Mammary epithelial cell (primary cell): ENCODE measurements at regions of chr2 and their contacts with region 1.

Region 1: GRCh38 chr2:97870396-97870843 is 125.3 kb downstream of the TMEM131 start:
- DNase-seq: peak; percentile 82
- H3K4me3 ChIP-seq: no peak overlapping the region
- H3K27ac ChIP-seq: peak overlapping the region; percentile 85
- H3K4me1 ChIP-seq: peaks cover 42% of the 10 kb centered on the region
- H3K27me3 ChIP-seq: no peaks in the 10 kb centered on the region
- CTCF ChIP-seq: no peak

Region 2: GRCh38 chr2:97654791-97655190 is 215.6 kb before region 1 on chr2:
- CTCF ChIA-PET with region 1: no interaction called
- dilution Hi-C with region 1: no loop called
- in situ Hi-C with region 1: no loop called
- intact Hi-C with region 1: no loop called
- DNase-seq: no peak
- H3K4me3 ChIP-seq: no peak overlapping the region
- H3K27ac ChIP-seq: no peak overlapping the region
- H3K4me1 ChIP-seq: no peaks in the 10 kb centered on the region
- H3K27me3 ChIP-seq: no peaks in the 10 kb centered on the region
- CTCF ChIP-seq: no peak

Region 3: DNA sequence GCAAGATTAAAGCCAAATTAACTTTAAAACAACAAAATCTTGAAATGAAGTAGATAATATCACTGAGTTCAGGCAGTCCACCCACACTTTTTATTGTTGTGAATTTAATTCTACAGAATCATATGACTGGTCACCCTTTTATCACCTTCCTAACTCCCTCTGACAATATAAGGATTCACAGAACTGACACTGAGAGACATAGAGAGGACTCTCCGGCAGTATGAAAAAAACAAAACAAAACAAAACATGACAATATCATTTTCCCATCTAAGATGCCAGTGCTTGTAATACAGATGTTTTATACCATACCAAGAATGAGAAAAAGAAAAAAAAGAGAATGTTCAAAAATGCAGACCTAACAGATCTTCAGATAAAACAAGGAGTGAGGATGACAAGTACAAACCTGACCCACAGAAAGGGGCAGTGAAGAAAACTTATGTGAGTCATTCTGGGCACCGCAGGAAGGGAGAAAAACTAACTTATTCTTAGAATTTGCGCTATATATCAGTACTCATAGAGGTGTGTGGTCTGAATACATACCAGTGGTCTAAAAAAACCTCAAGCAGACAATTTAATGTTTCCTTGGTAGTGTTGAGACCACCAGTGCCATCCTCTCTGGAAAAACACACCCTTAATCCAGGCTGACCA is 20.4 kb before region 1 on chr2:
- CTCF ChIA-PET with region 1: no interaction called
- dilution Hi-C with region 1: no loop called
- in situ Hi-C with region 1: no loop called
- intact Hi-C with region 1: loop called (anchors 1 kb)
- DNase-seq: peak; percentile 82
- H3K4me3 ChIP-seq: peak overlapping the region in 2 of 3 experiments; percentile 9 to 12
- H3K27ac ChIP-seq: peak overlapping the region; percentile 64
- H3K4me1 ChIP-seq: peaks cover 34% of the 10 kb centered on the region
- H3K27me3 ChIP-seq: no peaks in the 10 kb centered on the region
- CTCF ChIP-seq: no peak

Region 4: GRCh38 chr2:97900806-97901205 is 30.4 kb after region 1 on chr2:
- CTCF ChIA-PET with region 1: no interaction called
- dilution Hi-C with region 1: no loop called
- in situ Hi-C with region 1: no loop called
- intact Hi-C with region 1: loop called (anchors 5 kb)
- DNase-seq: peak; percentile 40
- H3K4me3 ChIP-seq: no peak overlapping the region
- H3K27ac ChIP-seq: no peak overlapping the region
- H3K4me1 ChIP-seq: peaks cover 15% of the 10 kb centered on the region
- H3K27me3 ChIP-seq: no peaks in the 10 kb centered on the region
- CTCF ChIP-seq: no peak